Heart right ventricle (tissue), 16 donors: ENCODE measurements at regions of chr12 and their contacts with region 1.

Region 1: DNA sequence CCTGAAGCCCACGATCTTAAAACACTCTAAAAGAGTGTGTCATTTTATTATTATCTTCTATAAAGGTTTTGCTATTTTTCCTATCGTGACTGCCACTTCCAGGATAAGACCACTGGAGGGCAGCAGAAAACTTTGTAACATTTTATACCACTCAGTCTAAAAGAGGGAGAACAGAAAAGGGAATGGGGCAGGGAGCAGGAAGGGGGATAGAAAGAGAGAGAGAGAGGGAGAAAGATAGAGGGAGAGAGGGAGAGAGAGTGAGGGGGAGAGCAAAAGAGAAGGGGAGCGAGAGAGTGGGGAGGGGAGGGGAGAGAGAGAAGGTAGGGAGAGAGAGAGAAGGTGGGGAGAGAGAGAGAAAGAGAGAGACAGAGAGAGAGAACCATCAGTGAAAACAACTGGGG is 2.0 kb upstream of the ART4 start:
- DNase-seq: peak in 1 of 2 donors; percentile 66
- ATAC-seq: peak in 7 of 8 donors; percentile 38 to 68 (median 54)
- H3K4me3 ChIP-seq: no peak overlapping the region
- H3K27ac ChIP-seq: peak overlapping the region in 8 of 10 donors; percentile 1 to 72 (median 43)
- H3K4me1 ChIP-seq: peaks cover 7 to 76% (median 50%) of the 10 kb centered on the region in 9 donors
- H3K27me3 ChIP-seq: no peaks in the 10 kb centered on the region
- CTCF ChIP-seq: peak; percentile 49 to 82 (median 72)

Region 2: DNA sequence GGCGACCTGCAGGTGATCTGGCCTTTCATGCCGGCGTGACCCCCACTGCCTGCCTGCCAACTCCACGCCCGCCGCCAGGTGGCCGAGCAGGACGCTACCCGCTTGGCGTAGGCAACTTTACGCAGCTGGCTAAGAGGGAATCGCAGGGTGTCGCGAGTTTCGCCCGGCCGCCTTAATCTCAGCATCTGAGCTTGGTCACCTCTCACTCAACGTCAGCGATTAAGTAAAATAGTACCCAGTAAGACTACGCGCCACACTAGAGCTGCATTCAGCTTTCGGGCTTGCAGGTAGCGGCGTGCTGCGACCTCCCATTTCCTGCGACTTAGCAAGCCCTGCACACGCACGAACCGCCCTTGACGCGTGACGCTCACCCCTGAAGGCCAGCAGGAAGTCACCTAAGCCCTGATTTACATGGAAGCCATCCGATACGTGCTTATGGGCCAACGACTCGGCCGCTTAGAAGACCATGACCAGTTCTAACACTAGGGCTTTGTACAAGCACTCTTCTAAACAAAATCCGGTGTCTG is 75.3 kb before region 1 on chr12:
- intact Hi-C with region 1: loop called in 4 of 10 experiments (anchors 2 to 5 kb)
- DNase-seq: peak; percentile 80 to 82
- ATAC-seq: peak; percentile 41 to 81 (median 69)
- H3K4me3 ChIP-seq: peak overlapping the region; percentile 51 to 94 (median 73)
- H3K27ac ChIP-seq: peak overlapping the region; percentile 88 to 98 (median 94)
- H3K4me1 ChIP-seq: peaks cover 4 to 52% (median 25%) of the 10 kb centered on the region in 9 donors
- H3K27me3 ChIP-seq: no peaks in the 10 kb centered on the region
- CTCF ChIP-seq: peak; percentile 64 to 78 (median 75)

Region 3: GRCh38 chr12:14884458-14884878 is 39.1 kb after region 1 on chr12:
- intact Hi-C with region 1: loop called in 4 of 10 experiments (anchors 2 to 5 kb)
- DNase-seq: peak; percentile 73 to 89
- ATAC-seq: peak; percentile 63 to 81 (median 75)
- H3K4me3 ChIP-seq: peak overlapping the region; percentile 2 to 61 (median 46)
- H3K27ac ChIP-seq: peak overlapping the region; percentile 41 to 89 (median 76)
- H3K4me1 ChIP-seq: peaks cover 0 to 43% (median 26%) of the 10 kb centered on the region in 9 donors
- H3K27me3 ChIP-seq: no peaks in the 10 kb centered on the region
- CTCF ChIP-seq: no peak

Region 4: DNA sequence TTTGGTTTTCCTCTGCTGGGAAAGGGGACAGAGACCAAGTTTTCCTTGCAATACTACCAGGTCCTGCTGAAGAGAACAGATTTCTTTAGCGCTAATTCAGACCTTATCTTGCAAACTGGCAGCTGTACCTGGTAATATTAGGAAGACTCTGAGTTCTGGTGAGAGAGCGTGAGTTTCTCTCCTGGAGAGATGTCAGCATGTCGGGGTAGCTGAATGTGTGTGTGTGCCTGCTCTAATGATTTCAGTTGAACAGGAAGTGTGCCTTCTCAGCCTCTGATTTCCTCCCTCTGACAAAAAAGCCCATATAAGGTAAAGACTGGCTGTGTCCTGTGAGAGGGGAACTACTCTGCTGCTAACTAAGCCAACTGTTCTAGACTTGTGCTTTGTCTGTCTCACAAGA is 103.3 kb after region 1 on chr12:
- intact Hi-C with region 1: loop called in 1 of 10 experiments (anchors 5 kb)
- DNase-seq: peak in 1 of 2 donors; percentile 44
- ATAC-seq: peak; percentile 83 to 90 (median 86)
- H3K4me3 ChIP-seq: peak overlapping the region in 1 of 10 donors; percentile 35
- H3K27ac ChIP-seq: peak overlapping the region; percentile 30 to 95 (median 80)
- H3K4me1 ChIP-seq: peaks cover 8 to 79% (median 55%) of the 10 kb centered on the region in 9 donors
- H3K27me3 ChIP-seq: no peaks in the 10 kb centered on the region
- CTCF ChIP-seq: no peak

Region 5: GRCh38 chr12:15122344-15122743 is 277.0 kb after region 1 on chr12:
- intact Hi-C with region 1: loop called in 1 of 10 experiments (anchors 10 kb)
- DNase-seq: peak in 1 of 2 donors; percentile 30
- ATAC-seq: peak in 7 of 8 donors; percentile 42 to 80 (median 74)
- H3K4me3 ChIP-seq: no peak overlapping the region
- H3K27ac ChIP-seq: peak overlapping the region in 3 of 10 donors; percentile 15 to 57 (median 32)
- H3K4me1 ChIP-seq: peaks cover 0 to 8% (median 0%) of the 10 kb centered on the region in 9 donors
- H3K27me3 ChIP-seq: no peaks in the 10 kb centered on the region
- CTCF ChIP-seq: no peak

Region 6: DNA sequence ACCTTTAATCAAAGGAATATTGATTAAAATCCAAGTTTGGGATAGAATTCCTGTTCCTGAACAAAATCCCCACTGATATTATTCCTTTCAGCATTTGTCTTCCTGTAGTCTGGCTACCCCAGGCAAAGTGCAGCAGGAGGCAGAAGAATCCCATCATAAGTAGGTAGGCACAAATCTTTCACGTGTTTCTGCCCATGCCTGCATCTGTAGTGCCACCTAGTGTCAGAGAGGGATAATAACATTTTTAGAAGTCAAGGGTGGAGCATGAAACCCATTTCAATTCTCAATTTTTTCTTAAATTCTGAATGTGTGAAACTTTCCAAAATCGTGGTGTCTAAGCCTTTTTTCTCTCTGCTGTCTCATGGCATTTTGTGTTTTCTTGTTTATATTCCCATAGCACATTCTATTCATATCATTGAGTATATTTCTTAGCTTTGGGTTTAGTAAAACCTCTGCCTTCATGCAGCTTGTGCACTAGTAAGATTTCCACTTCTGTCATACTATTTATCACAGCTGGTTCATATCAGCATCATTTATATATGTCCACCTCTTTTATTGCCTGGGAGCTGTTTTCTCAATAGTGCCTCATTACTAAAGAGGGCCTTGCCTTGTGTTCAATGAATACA is 423.7 kb after region 1 on chr12:
- intact Hi-C with region 1: loop called in 4 of 10 experiments (anchors 10 kb)
- DNase-seq: peak in 1 of 2 donors; percentile 24
- ATAC-seq: peak in 6 of 8 donors; percentile 28 to 69 (median 56)
- H3K4me3 ChIP-seq: no peak overlapping the region
- H3K27ac ChIP-seq: no peak overlapping the region
- H3K4me1 ChIP-seq: no peaks in the 10 kb centered on the region
- H3K27me3 ChIP-seq: peaks cover 0 to 6% (median 0%) of the 10 kb centered on the region in 7 donors
- CTCF ChIP-seq: peak; percentile 71 to 91 (median 85)